Cardiac septum (tissue), 1 donor: ENCODE measurements at regions of chr4 and their contacts with region 1.

Region 1: GRCh38 chr4:121696581-121697461 is at the start of gene ANXA5:
- DNase-seq: peak; percentile 92
- total RNA-seq, gene ANXA5: 152 TPM

Region 2: GRCh38 chr4:121255986-121256750 is 440.7 kb before region 1 on chr4:
- intact Hi-C with region 1: no loop called
- DNase-seq: no peak

Region 3: GRCh38 chr4:121711263-121712000 is 14.6 kb after region 1 on chr4:
- intact Hi-C with region 1: loop called (anchors 1 kb)
- DNase-seq: peak; percentile 90

Region 4: DNA sequence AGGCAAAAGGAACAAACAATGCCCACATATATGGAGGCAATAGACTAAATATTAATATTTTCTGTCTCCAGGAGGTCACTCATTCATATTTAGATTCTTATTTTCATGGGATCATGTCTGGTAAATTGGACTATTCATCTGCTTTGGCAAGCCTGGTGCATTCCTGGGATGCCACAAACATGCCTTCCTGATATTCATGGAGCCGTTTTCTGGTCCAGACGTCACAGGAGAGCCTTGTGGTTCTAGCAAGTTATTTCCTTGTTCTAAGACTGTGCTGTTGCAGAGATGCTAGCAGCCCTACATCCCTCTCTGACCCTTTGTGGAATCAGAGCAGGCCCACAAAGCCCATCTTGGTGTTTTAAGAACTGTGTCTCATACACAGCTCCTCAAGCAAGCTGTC is 88.2 kb after region 1 on chr4:
- intact Hi-C with region 1: no loop called
- DNase-seq: no peak

Region 5: GRCh38 chr4:121800961-121801714 is 104.3 kb after region 1 on chr4 and contains the start of gene EXOSC9:
- intact Hi-C with region 1: loop called (anchors 5 kb)
- DNase-seq: peak; percentile 96
- total RNA-seq, gene EXOSC9: 13.5 TPM

Region 6: DNA sequence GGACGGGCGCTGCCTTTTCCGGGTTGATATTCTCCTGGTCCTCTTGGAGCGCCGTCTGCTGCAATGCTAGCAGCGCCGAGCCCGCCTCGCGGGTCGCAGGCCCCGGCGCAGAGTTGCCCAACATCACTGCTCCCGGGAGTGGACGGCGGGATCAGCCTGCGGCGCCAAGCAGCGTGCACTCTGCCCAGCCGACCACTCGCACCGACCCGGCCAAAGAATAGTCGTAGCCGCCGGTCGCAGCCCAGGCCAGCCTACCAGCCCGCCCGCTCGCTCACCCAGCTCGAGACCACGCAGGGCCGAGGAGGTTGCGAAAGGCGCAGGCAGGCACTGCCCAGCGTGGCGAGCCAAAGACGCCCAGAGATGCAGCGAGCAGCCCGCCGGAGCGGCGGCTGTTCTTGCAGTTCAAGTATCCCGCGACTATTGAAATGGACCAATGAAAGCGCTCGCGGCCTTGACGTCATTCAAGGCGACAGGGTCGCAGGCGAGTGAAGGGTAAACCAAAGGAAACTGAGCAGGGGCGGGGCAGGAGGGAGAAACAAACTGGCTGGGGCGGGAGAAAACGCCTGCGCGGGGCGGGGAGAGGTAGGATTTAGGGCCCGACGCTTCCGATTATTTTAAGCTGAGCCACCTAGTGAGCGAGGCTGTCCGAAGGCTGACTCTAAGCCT is 126.8 kb after region 1 on chr4 and contains the start of gene CCNA2:
- intact Hi-C with region 1: loop called (anchors 5 kb)
- DNase-seq: peak; percentile 97
- total RNA-seq, gene CCNA2: 0.38 TPM

Region 7: GRCh38 chr4:121908346-121908745 is 211.5 kb after region 1 on chr4:
- intact Hi-C with region 1: no loop called
- DNase-seq: no peak